Mammary epithelial cell (primary cell): ENCODE measurements at regions of chr6 and their contacts with region 1.

Region 1: GRCh38 chr6:72084992-72085569 is 198.7 kb downstream of the RIMS1 start:
- DNase-seq: no peak
- H3K4me3 ChIP-seq: no peak overlapping the region
- H3K27ac ChIP-seq: no peak overlapping the region
- H3K4me1 ChIP-seq: no peaks in the 10 kb centered on the region
- H3K27me3 ChIP-seq: no peaks in the 10 kb centered on the region
- CTCF ChIP-seq: peak; percentile 37 to 46

Region 2: DNA sequence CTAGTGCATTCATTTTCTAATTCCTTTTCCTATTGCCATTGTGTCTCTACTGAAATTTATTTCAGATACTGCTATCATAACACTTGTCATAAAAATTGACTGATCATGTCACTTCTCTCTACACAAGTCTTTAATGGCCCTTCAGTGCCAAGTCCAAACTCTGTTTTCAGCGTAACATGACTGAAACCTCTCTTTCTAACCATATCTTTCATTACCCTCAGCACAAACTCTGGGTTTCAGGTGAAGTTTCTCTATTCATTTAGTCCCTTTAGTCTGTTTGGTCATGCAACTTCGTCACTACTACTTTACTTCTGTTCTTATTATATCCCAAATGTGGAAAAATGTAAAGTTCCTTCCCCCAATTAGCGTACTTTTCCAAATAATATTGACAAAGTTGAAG is 561.5 kb before region 1 on chr6:
- CTCF ChIA-PET with region 1: no interaction called
- dilution Hi-C with region 1: no loop called
- in situ Hi-C with region 1: loop called in 1 of 2 experiments (anchors 10 kb)
- intact Hi-C with region 1: no loop called
- DNase-seq: no peak
- H3K4me3 ChIP-seq: no peak overlapping the region
- H3K27ac ChIP-seq: no peak overlapping the region
- H3K4me1 ChIP-seq: no peaks in the 10 kb centered on the region
- H3K27me3 ChIP-seq: peaks cover 8% of the 10 kb centered on the region
- CTCF ChIP-seq: no peak

Region 3: DNA sequence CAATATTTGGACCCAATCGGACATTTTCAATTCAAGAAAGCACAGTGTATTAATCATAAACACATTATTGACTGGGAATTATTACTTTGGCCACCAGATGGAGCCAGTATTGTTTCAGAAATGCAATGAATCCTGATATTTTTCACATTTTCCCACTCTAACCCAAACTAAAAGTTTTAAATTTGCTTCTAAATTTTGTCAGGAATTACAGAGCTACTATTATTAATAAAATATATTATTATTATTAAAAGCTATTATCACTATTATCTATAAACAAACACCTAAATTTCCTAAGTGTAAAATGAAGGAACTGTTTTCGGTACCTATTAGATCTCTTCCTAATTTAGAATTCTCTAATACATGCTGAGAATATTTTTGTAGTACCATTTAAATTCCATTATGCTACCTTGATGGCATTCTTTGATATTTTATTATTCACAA is 551.1 kb before region 1 on chr6:
- CTCF ChIA-PET with region 1: no interaction called
- dilution Hi-C with region 1: no loop called
- in situ Hi-C with region 1: loop called (anchors 10 kb)
- intact Hi-C with region 1: loop called (anchors 2 kb)
- DNase-seq: no peak
- H3K4me3 ChIP-seq: no peak overlapping the region
- H3K27ac ChIP-seq: no peak overlapping the region
- H3K4me1 ChIP-seq: no peaks in the 10 kb centered on the region
- H3K27me3 ChIP-seq: no peaks in the 10 kb centered on the region
- CTCF ChIP-seq: peak; percentile 61 to 66

Region 4: GRCh38 chr6:71621918-71622519 is 463.1 kb before region 1 on chr6:
- CTCF ChIA-PET with region 1: no interaction called
- dilution Hi-C with region 1: no loop called
- in situ Hi-C with region 1: no loop called
- intact Hi-C with region 1: loop called (anchors 1 kb)
- DNase-seq: no peak
- H3K4me3 ChIP-seq: no peak overlapping the region
- H3K27ac ChIP-seq: no peak overlapping the region
- H3K4me1 ChIP-seq: no peaks in the 10 kb centered on the region
- H3K27me3 ChIP-seq: peaks cover 2% of the 10 kb centered on the region
- CTCF ChIP-seq: peak; percentile 42 to 56